IMR-90 (cell line): ENCODE measurements at regions of chr14 and their contacts with region 1.

Region 1: DNA sequence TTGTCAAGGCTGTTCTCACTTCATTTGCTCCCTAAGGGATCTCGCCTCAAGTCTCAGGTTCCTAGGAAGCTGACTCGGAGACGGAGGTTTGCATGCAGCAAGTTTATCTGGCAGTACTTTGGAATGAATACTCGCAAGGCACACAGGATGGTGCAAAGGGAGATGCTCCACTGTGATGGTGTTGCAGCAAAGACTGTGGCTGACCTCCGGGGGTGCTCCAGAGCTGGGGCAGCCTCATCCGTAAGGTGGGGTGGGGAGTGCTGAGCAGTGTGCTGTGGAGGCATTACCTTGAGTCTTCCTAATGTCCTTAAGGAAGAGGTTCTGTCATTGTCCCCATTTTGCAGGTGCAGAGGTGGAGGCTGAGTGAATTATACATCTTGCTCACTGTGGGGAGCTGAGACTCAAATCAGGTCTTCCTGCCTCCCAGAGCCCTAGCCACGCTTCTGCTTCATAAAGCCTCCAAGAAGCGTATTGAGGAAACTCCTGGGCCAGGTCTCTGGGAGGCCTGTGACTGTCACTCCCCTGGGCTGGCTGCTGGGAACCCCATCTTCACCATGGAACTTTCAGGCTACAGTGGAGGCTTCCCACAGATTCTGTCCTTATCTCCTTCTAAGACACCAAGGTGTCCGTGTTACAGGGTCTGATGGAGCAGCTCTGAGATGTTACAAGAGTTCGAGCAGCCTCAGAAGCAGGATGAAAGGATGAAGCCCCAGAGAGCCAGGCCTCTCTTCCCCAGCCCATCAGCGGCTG is 39.5 kb downstream of the GALNT16 start:
- DNase-seq: no peak
- ATAC-seq: peak; percentile 32; the same call in 1 of the 2 replicates
- H3K4me3 ChIP-seq: no peak overlapping the region
- H3K27ac ChIP-seq: no peak overlapping the region
- H3K4me1 ChIP-seq: no peaks in the 10 kb centered on the region
- H3K27me3 ChIP-seq: peaks cover 48% of the 10 kb centered on the region
- CTCF ChIP-seq: 0 out of 2 replicates have a peak, but pooled peaks have one; percentile 16
- POLR2A ChIP-seq: no peak
- RAD21 ChIP-seq: peak; percentile 36

Region 2: DNA sequence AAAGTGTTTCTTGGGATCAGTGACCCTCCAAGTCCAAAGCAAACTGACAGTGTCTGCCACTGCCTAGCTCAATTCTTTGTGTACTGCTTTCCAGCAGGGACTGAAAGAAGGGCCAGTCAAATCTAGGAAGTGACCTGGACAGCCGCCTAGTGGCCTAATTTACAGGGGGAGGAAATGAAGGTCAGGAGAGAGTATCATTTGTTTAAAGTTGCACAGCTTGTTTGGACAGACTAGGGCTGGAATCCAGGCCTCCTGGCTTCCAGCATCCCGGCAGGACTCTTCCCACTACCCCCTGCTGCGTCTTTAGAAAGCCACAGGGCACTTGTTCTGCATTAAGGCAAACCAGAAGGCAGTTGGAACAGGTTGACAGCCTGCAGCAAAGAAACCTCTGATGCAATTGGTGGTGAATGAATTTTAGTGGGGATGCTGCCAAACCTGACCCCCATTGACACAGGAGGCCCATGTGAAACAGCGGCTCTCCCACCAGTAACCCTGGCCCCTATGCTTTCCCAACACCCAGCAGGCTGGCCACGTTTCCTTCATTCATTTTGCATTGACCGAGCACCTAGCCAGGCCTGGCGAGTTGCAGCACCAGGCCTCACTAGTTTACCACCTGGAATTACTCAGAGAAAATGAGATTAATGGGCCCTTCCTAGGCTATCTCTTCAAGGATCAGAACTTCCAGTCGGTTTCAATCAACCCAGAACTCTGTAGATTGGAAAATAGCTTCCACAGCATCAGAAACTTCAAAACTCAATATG is 11.3 kb before region 1 on chr14:
- CTCF ChIA-PET with region 1: interaction called, 17 read pairs
- POLR2A ChIA-PET with region 1: no interaction called
- dilution Hi-C with region 1: no loop called
- in situ Hi-C with region 1: no loop called
- intact Hi-C with region 1: no loop called
- DNase-seq: peak; percentile 42
- ATAC-seq: peak; percentile 85
- H3K4me3 ChIP-seq: no peak overlapping the region
- H3K27ac ChIP-seq: no peak overlapping the region
- H3K4me1 ChIP-seq: no peaks in the 10 kb centered on the region; the same call in 1 of the 2 replicates
- H3K27me3 ChIP-seq: peaks cover 22% of the 10 kb centered on the region
- CTCF ChIP-seq: peak; percentile 43
- POLR2A ChIP-seq: no peak
- RAD21 ChIP-seq: peak; percentile 44